ENCODE measurements at regions of chr19 and their contacts with region 1.

Region 1: GRCh38 chr19:6297202-6297601 is 17.4 kb upstream of the MLLT1 start:
- DNase-seq: no peak
- ATAC-seq: no peak
- H3K4me3 ChIP-seq: no peak overlapping the region
- H3K27ac ChIP-seq: no peak overlapping the region
- H3K4me1 ChIP-seq: no peaks in the 10 kb centered on the region
- H3K27me3 ChIP-seq: no peaks in the 10 kb centered on the region
- CTCF ChIP-seq: no peak
- EP300 ChIP-seq: no peak
- POLR2A ChIP-seq: no peak
- RAD21 ChIP-seq: no peak

Region 2: GRCh38 chr19:6161271-6161850 is 135.8 kb before region 1 on chr19:
- CTCF ChIA-PET with region 1: interaction called, 16 read pairs
- POLR2A ChIA-PET with region 1: no interaction called
- RAD21 ChIA-PET with region 1: no interaction called
- SMC1A ChIA-PET with region 1: interaction called, 3 read pairs
- in situ Hi-C with region 1: no loop called
- intact Hi-C with region 1: loop called (anchors 1 kb)
- DNase-seq: peak; percentile 52
- ATAC-seq: peak; percentile 71
- H3K4me3 ChIP-seq: no peak overlapping the region
- H3K27ac ChIP-seq: no peak overlapping the region
- H3K4me1 ChIP-seq: no peaks in the 10 kb centered on the region
- H3K27me3 ChIP-seq: no peaks in the 10 kb centered on the region
- CTCF ChIP-seq: no peak
- EP300 ChIP-seq: no peak
- POLR2A ChIP-seq: no peak
- RAD21 ChIP-seq: no peak

Region 3: DNA sequence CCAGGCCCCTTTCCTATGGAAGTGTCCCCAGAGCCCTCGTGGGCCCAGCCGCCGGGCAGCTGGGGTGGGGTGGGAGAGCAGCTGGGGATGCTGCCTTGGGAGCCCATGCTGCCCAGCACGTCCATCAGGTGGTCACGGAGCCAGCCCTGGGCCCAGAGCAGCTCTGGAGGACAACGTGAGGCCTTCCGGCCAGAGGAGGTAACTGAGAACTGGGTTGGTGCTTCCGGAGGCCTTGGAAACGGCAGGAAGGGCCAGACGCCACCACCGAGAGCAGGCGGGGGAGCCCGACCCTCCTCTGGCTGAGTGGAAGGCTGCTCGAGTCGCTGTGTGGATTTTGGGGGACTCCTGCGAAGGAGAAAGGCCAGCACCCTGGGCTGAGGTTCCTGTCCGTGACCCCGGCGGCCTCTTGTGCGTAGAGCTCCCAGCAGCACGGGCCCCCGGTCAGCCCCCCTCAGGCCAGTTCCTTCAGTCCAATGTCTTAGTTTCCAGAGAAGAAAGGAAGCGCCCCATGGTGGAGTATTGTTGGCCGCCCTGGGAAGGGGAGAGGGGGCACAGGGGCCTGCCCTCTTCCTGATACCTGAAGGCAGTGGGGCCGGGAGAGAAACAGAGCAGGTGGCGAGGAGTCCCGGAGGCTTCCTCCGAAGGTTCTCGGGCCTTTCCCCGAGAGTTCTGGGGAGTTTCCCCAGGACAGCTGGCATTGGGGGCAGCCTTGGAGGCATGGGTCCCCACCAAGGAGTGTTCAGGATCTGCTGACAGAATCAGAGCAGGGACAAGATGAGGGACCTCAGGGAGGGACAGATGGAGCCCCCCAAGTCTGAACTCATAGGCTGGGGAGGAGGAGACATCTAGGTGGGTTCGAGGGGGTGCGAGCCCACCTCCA is 86.2 kb before region 1 on chr19:
- CTCF ChIA-PET with region 1: no interaction called
- POLR2A ChIA-PET with region 1: no interaction called
- RAD21 ChIA-PET with region 1: no interaction called
- SMC1A ChIA-PET with region 1: no interaction called
- in situ Hi-C with region 1: no loop called
- intact Hi-C with region 1: no loop called
- DNase-seq: no peak
- ATAC-seq: no peak
- H3K4me3 ChIP-seq: no peak overlapping the region
- H3K27ac ChIP-seq: no peak overlapping the region
- H3K4me1 ChIP-seq: no peaks in the 10 kb centered on the region
- H3K27me3 ChIP-seq: no peaks in the 10 kb centered on the region
- CTCF ChIP-seq: no peak
- EP300 ChIP-seq: no peak
- POLR2A ChIP-seq: no peak
- RAD21 ChIP-seq: no peak

Region 4: DNA sequence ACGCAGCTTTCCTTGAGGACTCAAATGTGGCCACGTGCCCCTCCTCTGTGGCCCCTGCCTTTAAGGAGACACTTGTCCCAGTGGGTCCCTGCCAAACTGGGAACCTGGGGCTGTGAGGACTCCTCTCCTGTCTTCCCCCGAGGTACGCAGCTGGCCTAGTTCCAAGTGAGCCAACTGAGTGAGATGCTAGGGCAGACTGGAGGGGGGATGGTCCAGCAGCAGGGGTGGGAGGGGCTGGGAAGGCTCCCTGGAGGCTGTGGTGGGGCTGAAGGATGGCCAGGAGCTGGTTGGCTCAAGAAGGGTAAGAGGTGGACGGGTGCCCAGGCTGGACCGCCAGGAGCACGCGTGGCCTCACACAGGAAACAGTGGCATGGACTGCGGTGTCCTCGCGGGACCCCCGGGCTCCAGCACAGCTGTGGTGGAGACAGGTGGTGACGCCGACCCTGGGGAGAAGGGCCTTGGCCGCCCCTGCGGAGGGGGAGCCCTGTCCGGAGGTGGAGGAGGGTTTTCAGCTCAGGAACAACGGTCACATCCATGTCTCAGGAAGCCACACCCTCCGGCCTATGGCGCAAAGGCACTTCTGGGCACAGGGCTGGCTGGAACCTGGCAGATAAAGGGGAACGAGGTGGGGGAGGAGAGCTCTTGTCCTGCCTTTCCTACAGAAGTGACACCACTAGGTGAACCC is 63.2 kb before region 1 on chr19:
- CTCF ChIA-PET with region 1: no interaction called
- POLR2A ChIA-PET with region 1: no interaction called
- RAD21 ChIA-PET with region 1: no interaction called
- SMC1A ChIA-PET with region 1: no interaction called
- in situ Hi-C with region 1: no loop called
- intact Hi-C with region 1: no loop called
- DNase-seq: no peak
- ATAC-seq: no peak
- H3K4me3 ChIP-seq: no peak overlapping the region
- H3K27ac ChIP-seq: no peak overlapping the region
- H3K4me1 ChIP-seq: no peaks in the 10 kb centered on the region
- H3K27me3 ChIP-seq: no peaks in the 10 kb centered on the region
- CTCF ChIP-seq: no peak
- EP300 ChIP-seq: no peak
- POLR2A ChIP-seq: no peak
- RAD21 ChIP-seq: no peak

Region 5: GRCh38 chr19:6392221-6393073 is 95.2 kb after region 1 on chr19:
- CTCF ChIA-PET with region 1: no interaction called
- POLR2A ChIA-PET with region 1: no interaction called
- RAD21 ChIA-PET with region 1: no interaction called
- SMC1A ChIA-PET with region 1: no interaction called
- in situ Hi-C with region 1: no loop called
- intact Hi-C with region 1: no loop called
- DNase-seq: no peak
- ATAC-seq: peak; percentile 35
- H3K4me3 ChIP-seq: peak overlapping the region; percentile 99
- H3K27ac ChIP-seq: peak overlapping the region; percentile 93
- H3K4me1 ChIP-seq: peaks cover 11% of the 10 kb centered on the region
- H3K27me3 ChIP-seq: no peaks in the 10 kb centered on the region
- CTCF ChIP-seq: no peak
- EP300 ChIP-seq: no peak
- POLR2A ChIP-seq: no peak
- RAD21 ChIP-seq: no peak

Region 6: GRCh38 chr19:6610934-6611852 is 314.0 kb after region 1 on chr19:
- CTCF ChIA-PET with region 1: no interaction called
- POLR2A ChIA-PET with region 1: no interaction called
- RAD21 ChIA-PET with region 1: no interaction called
- SMC1A ChIA-PET with region 1: no interaction called
- in situ Hi-C with region 1: no loop called
- intact Hi-C with region 1: no loop called
- DNase-seq: no peak
- ATAC-seq: no peak
- H3K4me3 ChIP-seq: no peak overlapping the region
- H3K27ac ChIP-seq: peak overlapping the region; percentile 27; the same call in 1 of the 2 replicates
- H3K4me1 ChIP-seq: peaks cover 35% of the 10 kb centered on the region
- H3K27me3 ChIP-seq: no peaks in the 10 kb centered on the region
- CTCF ChIP-seq: no peak
- EP300 ChIP-seq: no peak
- POLR2A ChIP-seq: no peak
- RAD21 ChIP-seq: no peak